HEK293 (cell line): ENCODE measurements at regions of chr12 and their contacts with region 1.

Region 1: DNA sequence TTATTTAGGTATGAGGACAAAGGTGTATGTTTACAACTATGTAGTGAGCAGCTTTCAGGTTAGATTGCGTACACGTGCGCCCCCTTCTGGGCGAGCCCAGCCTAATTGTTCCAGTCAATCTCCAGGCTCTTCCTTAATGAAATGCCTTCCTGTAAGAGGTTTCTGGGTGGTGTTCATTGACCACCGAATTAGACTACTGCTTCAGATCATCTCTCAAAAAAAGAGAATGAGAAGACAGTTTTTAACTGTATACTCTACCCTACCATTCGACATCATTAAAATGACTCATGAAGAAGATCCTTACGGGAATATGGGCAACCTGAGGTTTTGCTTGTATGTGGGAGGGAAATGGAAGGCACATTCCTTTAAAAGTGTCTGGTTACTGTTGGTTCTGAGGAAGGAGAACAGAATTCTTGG is 2.1 kb downstream of the LUM start:
- H3K4me3 ChIP-seq: no peak overlapping the region
- H3K27ac ChIP-seq: no peak overlapping the region
- H3K4me1 ChIP-seq: 0 out of 2 replicates have a peak, but pooled peaks cover 2% of the 10 kb centered on the region
- CTCF ChIP-seq: no peak

Region 2: DNA sequence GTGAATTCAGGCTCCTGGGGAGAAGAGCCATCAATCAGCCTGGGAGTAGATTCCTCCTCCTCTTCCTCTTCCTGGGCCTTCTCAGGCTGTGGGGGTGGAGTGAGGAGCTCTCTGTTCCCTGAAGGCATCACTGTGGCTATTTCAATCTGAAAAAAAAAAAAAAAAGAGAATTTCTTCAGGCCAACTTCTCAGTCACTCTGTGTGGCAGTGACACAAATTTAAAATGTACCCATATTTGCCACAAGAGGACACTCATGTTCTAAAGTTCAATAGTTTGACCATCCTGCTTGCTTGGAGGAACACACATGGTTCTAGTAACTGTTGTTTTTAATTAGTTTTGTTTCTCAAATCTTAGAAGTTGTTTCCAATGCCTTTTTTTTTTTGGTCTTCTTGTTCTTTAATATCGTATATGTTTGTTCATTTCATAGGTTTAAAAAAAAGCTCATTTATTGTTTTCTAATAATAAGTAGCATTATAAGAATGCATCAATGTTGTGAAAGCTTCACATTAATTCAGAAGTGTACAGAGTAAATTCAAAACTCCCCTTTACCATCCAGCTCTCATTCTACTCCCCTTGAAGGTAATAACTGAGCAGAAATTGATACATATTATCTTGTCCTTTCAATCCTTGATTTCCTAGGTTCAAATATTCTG is 130.9 kb before region 1 on chr12:
- CTCF ChIA-PET with region 1: interaction called, 84 read pairs
- POLR2A ChIA-PET with region 1: no interaction called
- H3K4me3 ChIP-seq: no peak overlapping the region
- H3K27ac ChIP-seq: no peak overlapping the region
- H3K4me1 ChIP-seq: no peaks in the 10 kb centered on the region
- CTCF ChIP-seq: no peak

Region 3: DNA sequence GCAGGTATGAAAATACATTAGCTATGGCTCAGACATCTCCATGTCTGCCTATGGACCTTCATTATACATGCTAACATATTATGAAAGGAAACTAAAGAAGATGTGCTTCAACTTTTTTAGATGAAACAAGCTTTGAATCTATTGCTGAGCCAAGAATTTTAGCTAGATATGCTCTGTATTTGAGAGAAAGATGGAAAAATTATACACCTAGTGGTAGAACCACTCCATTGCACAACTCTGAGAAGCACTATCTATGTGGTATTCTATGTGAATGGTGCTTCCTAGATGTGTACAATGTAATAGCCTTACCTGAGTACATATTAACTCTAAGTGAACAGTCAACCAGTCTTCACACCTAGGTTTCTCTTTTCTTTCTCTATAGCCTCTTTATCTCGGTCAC is 121.6 kb before region 1 on chr12:
- CTCF ChIA-PET with region 1: interaction called, 10 read pairs
- POLR2A ChIA-PET with region 1: no interaction called
- H3K4me3 ChIP-seq: no peak overlapping the region
- H3K27ac ChIP-seq: no peak overlapping the region
- H3K4me1 ChIP-seq: no peaks in the 10 kb centered on the region
- CTCF ChIP-seq: no peak

Region 4: DNA sequence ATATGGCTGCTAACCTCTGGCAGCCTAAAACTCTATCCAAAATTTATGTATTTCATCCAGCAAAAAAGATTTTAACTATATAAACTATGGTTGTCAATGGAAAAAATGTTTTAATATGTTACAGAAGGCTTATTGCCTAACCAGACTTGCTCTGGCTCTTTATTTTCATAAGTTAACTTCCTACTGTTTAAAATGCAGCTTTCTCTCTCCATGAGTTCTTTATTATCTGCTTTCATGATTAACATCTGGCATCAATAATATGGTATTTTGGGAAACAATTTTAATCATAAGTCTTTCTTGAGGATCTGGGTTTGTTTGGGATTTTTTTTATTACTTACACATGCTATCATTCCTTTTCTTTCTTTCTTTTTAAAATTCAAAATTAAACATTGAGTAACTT is 71.9 kb before region 1 on chr12:
- CTCF ChIA-PET with region 1: interaction called, 13 read pairs
- POLR2A ChIA-PET with region 1: no interaction called
- H3K4me3 ChIP-seq: no peak overlapping the region
- H3K27ac ChIP-seq: no peak overlapping the region
- H3K4me1 ChIP-seq: no peaks in the 10 kb centered on the region
- CTCF ChIP-seq: no peak

Region 5: DNA sequence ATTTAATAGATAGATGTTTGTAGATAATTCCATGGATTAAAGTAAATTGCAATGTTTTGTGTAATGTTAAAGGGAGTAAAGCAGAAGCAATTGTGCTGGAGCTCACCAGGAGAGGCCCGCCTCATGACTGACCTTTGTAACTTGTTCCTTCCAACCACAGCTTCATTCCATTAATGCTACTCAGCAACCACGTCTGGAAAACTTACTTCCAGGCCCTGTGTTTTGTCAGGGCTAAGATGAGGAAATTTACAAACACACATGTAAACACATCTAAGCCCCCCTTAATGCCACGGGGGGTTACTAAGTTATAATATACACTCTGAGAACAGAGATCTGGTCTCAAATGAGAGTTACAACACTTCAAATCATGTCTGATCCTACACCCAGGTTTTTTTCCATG is 10.2 kb before region 1 on chr12:
- CTCF ChIA-PET with region 1: interaction called, 28 read pairs
- POLR2A ChIA-PET with region 1: no interaction called
- H3K4me3 ChIP-seq: no peak overlapping the region
- H3K27ac ChIP-seq: no peak overlapping the region
- H3K4me1 ChIP-seq: no peaks in the 10 kb centered on the region
- CTCF ChIP-seq: no peak

Region 6: GRCh38 chr12:91326058-91327027 is 217.2 kb after region 1 on chr12:
- CTCF ChIA-PET with region 1: interaction called, 16 read pairs
- POLR2A ChIA-PET with region 1: no interaction called
- H3K4me3 ChIP-seq: no peak overlapping the region
- H3K27ac ChIP-seq: no peak overlapping the region
- H3K4me1 ChIP-seq: no peaks in the 10 kb centered on the region
- CTCF ChIP-seq: no peak